ENCODE measurements at regions of chr22 and their contacts with region 1.

Region 1: DNA sequence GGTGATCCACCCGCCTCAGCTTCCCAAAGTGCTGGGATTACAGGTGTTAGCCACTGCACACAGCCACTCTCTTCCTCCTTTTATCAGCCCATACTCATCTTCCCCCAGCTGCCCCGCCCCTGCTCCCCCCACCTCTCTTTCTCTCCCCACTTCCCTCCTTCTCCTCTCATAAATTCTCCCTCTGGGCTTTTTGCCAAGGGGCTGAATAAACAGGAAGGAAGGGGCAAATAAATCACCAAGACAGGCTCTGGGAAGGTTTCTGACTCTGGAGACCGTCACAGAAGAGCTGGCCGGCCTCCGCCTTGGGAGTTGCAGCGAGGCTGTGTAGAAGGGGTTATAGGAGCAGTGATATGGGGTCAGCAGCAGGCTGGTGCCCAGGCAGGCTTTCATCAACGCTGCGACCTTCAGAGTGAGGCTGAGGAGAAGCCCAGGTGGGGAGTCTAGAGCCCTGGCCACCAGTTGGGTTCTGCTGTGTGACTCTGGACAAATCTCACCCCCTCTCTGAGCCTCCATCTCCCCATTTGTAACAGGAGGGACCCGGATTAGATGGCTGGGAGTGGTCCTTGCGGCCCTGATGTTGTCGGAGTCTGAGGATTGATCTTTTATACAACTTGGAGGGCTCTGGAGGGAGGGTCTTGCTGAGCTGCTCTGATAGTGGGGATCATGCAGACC is 62.6 kb upstream of the RASD2 start:
- DNase-seq: peak; percentile 95
- H3K4me3 ChIP-seq: no peak overlapping the region
- H3K27ac ChIP-seq: peak overlapping the region; percentile 66 to 92 (median 86)
- H3K4me1 ChIP-seq: peaks cover 5 to 65% (median 58%) of the 10 kb centered on the region in 4 donors
- H3K27me3 ChIP-seq: no peaks in the 10 kb centered on the region
- CTCF ChIP-seq: no peak
- EP300 ChIP-seq: peak; percentile 65 to 96 (median 90)
- POLR2A ChIP-seq: peak in 1 of 2 donors; percentile 6

Region 2: DNA sequence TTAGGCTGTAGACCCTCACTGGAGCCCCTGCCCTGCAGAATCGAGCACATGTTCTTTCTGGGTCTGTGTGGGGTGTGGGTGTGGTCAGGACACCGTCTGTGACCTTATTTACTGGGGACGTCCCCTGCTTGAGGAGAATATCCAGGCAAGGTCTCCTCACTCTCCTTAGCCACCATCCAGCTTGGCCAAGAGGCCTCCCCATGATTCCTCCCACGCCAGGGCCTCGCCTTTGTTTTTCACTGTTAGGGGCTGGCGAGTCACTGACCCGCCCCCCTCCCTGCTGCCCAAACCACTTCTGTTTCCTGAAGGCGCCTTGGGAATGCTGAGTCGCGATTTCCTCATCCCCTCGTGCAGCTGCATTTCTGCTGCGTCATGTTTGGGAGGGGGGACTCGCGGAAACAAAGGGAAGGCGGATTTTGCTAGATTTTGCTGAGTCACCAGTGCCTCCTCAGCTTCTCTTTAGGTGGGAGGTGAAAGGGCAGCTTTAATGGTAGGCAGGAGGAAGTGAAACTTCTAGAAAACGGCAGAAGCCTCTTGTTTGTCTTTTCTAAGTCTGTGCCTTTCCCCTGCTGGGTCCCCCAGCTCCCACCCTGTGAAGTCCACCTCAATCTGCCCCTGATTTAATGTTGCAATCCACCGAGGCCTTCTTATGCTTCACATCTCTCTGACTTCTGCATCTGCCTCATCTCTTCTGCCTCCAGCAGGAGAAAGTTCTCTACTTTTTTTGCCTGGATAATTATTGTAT is 101.1 kb before region 1 on chr22:
- intact Hi-C with region 1: no loop called
- DNase-seq: peak; percentile 98
- H3K4me3 ChIP-seq: peak overlapping the region in 2 of 4 donors; percentile 2 to 20
- H3K27ac ChIP-seq: peak overlapping the region; percentile 67 to 87 (median 76)
- H3K4me1 ChIP-seq: peaks cover 0 to 36% (median 30%) of the 10 kb centered on the region in 4 donors
- H3K27me3 ChIP-seq: no peaks in the 10 kb centered on the region
- CTCF ChIP-seq: no peak
- EP300 ChIP-seq: peak in 2 of 4 donors; percentile 60 to 90
- POLR2A ChIP-seq: no peak

Region 3: DNA sequence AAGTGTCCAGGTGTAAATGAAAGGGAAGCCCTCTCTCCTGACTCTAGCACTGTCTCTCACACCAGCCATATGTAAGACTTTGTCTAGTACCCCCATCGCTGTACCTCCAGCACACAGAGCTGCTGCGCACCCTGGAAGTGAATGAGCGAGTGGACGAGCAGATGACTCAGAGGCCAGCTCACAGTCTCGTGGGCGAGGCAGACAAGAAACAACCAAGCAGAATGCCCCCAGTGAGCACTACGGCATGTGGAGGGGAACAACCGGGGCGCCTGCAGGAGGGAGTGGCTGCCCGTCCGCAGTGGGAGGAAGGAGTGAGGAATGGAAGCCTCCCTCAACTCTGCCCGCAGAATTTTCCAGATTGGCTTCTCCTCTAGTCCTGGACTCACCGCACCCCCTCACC is 31.7 kb before region 1 on chr22:
- intact Hi-C with region 1: loop called (anchors 1 kb)
- DNase-seq: peak; percentile 91
- H3K4me3 ChIP-seq: no peak overlapping the region
- H3K27ac ChIP-seq: peak overlapping the region; percentile 55 to 87 (median 85)
- H3K4me1 ChIP-seq: peaks cover 0 to 58% (median 31%) of the 10 kb centered on the region in 4 donors
- H3K27me3 ChIP-seq: no peaks in the 10 kb centered on the region
- CTCF ChIP-seq: no peak
- EP300 ChIP-seq: peak in 2 of 4 donors; percentile 23 to 77
- POLR2A ChIP-seq: no peak

Region 4: DNA sequence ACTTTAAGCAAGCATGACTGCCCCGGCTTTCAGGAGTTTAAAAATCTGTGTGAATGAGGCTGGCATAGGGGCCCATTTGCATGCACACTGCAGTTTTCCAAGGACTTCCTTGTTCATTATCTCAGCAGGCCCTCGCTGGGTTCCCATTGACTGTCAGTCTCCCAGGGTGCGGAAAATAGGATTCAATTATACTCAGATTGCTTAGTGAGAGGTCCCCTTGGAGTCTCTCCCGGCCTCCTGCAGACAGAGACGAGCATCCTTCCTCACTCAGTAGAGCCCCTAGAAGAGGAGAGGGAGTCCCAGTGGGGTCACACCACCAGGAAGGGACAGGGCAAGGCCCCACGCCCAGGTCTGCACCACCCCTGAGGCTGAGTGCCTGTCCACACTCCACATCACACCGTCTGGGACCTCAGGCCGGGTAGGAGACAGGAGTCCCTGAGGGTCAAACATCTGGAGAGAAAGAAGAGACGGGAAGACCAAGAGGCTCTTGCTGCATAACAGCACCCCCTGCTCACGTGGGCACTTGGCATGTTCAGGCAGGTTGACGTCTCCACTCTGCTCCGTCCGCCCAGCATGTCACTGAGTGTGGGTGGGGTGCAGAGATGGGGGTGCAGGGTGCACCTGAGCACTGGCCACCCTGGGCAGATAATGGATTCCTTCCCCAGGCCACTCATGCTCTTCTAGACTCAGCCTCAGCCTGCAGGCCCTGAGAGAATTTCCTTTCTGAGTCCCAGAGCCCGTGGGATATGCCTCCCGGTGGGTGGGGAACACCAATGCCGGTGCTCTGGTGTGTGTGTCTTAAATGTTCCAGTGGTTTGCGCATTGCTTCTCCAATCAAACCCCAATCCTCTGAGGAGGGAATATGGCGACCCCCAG is 19.3 kb before region 1 on chr22:
- intact Hi-C with region 1: no loop called
- DNase-seq: no peak
- H3K4me3 ChIP-seq: no peak overlapping the region
- H3K27ac ChIP-seq: no peak overlapping the region
- H3K4me1 ChIP-seq: no peaks in the 10 kb centered on the region
- H3K27me3 ChIP-seq: no peaks in the 10 kb centered on the region
- CTCF ChIP-seq: no peak
- EP300 ChIP-seq: no peak
- POLR2A ChIP-seq: no peak

Region 5: DNA sequence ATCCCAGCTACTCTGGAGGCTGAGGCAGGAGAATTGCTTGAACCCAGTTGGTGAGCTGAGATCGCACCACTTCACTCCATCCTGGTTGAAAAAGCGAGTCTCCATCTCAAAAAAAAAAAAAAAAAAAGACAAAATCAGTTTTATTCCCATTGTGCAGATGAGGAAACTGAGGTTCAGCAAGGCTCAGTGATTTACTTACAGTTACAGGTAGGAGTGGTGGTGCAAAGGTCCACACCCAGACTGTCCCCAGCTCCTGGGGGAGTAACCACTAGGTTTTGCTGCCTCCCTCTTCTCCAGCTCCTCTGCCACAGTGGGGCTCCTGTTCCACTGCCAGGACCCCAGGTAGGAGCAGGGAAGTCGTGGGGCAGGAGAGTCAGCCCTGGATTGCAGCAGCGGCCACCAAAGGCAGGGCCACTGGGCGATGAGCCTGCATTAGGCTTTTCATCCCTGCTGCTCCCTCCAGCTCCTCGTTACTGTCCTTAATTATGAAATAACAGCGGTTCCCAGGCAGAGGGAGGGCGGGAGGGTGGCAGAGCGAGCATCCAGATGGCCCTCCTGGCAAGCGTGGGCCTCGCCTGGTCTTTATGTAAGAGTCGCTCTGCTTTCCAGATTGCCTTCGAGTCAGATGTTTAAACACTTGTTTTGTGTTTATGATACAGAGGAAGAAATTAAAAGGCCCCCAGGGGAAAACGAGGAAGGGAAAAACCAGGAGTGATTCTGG is 47.1 kb after region 1 on chr22:
- intact Hi-C with region 1: loop called (anchors 2 kb)
- DNase-seq: peak; percentile 92
- H3K4me3 ChIP-seq: no peak overlapping the region
- H3K27ac ChIP-seq: peak overlapping the region; percentile 40 to 85 (median 76)
- H3K4me1 ChIP-seq: peaks cover 0 to 32% (median 17%) of the 10 kb centered on the region in 4 donors
- H3K27me3 ChIP-seq: no peaks in the 10 kb centered on the region
- CTCF ChIP-seq: no peak
- EP300 ChIP-seq: peak in 1 of 4 donors; percentile 59
- POLR2A ChIP-seq: no peak

Region 6: DNA sequence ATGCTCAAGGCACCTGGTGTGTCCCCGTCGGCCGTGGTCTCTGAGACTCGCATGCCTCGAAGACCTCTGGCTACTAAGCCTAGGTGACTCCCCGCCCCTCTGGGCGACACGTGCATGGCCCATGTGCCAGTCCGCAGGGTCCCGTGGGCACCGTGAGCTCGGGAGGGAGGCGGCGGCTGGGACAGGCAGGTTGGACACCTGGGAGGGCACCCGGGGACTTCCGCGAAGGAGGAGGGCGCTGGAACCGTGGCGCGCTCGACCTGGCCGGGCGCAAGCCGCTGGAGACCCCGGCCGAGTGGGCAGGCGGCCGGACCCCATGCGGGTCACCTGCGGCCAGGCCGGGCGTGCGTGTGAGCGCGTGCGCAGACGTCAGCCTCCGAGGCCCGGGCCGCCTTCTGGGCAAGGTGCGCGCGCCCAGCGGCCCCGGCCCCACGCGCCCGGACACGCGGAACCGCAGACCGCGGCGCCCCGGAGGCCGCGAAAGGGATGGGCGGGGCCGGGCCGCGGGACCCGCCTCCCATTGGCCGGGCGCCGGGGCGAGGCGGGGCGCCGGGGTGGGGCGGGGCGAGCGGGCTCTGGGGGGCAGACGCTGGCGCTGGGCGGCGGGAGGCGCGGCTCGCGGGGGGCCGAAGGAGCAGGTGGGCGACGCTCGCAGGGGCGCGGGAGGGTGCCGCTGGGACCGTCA is 62.0 kb after region 1 on chr22:
- intact Hi-C with region 1: loop called (anchors 2 kb)
- DNase-seq: peak; percentile 81
- H3K4me3 ChIP-seq: peak overlapping the region; percentile 62 to 79 (median 68)
- H3K27ac ChIP-seq: peak overlapping the region; percentile 77 to 94 (median 88)
- H3K4me1 ChIP-seq: peaks cover 0 to 51% (median 44%) of the 10 kb centered on the region in 4 donors
- H3K27me3 ChIP-seq: peaks cover 0 to 3% (median 0%) of the 10 kb centered on the region in 3 donors
- CTCF ChIP-seq: no peak
- EP300 ChIP-seq: no peak
- POLR2A ChIP-seq: no peak

Region 7: GRCh38 chr22:35582861-35583670 is 105.0 kb after region 1 on chr22:
- intact Hi-C with region 1: loop called (anchors 5 kb)
- DNase-seq: peak; percentile 86
- H3K4me3 ChIP-seq: no peak overlapping the region
- H3K27ac ChIP-seq: peak overlapping the region in 3 of 4 donors; percentile 76 to 78 (median 77)
- H3K4me1 ChIP-seq: peaks cover 0 to 42% (median 31%) of the 10 kb centered on the region in 4 donors
- H3K27me3 ChIP-seq: no peaks in the 10 kb centered on the region
- CTCF ChIP-seq: peak; percentile 93 to 96 (median 95)
- EP300 ChIP-seq: no peak
- POLR2A ChIP-seq: no peak

Region 8: DNA sequence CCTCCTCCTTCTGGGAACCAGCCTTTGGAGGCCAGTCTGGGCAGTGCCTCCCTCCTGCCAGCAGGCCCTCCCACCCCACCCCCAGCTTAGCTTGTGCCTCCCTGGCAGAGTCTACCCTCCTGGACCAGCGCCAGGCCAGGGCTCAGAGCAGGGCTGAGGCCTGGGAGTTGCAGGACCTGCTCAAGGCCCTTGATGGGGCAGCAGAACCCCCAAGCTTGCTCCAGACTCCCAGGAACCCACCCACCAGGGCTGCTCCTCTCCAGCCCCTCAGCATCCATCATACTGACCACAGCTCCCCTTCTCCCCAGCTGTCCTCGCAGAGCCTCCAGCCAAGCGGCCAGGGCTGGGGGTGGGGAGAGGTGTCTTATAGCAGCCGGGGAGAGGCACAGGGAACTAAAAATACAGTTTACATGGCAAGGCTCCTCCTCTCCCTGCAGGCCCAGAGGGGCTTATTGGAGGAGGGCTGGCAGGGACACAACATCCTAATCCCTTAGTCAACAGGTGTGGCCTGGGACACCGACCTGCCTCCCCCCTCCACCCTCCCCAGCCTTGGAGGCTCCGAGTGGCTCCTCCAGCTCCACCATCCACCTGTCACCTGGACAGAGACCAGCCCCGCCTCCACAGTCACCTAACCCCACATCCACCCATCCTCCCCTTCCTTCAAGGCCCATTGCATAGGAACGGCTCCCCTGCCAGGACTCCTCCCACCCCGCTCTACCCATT is 144.3 kb after region 1 on chr22:
- intact Hi-C with region 1: loop called (anchors 5 kb)
- DNase-seq: peak; percentile 88
- H3K4me3 ChIP-seq: no peak overlapping the region
- H3K27ac ChIP-seq: peak overlapping the region; percentile 80 to 85 (median 82)
- H3K4me1 ChIP-seq: peaks cover 0 to 42% (median 36%) of the 10 kb centered on the region in 4 donors
- H3K27me3 ChIP-seq: no peaks in the 10 kb centered on the region
- CTCF ChIP-seq: no peak
- EP300 ChIP-seq: peak in 1 of 4 donors; percentile 2
- POLR2A ChIP-seq: no peak